Common myeloid progenitor, CD34-positive (primary cell): ENCODE measurements at regions of chr11 and their contacts with region 1.

Region 1: GRCh38 chr11:9384535-9385303 is at the start of gene IPO7:
- DNase-seq: peak; percentile 87 to 95 (median 94)
- H3K4me3 ChIP-seq: peak within 1 kb of the TSS; percentile 75 to 98 (median 92)
- H3K27ac ChIP-seq: peak within 1 kb of the TSS; percentile 80 to 91
- H3K4me1 ChIP-seq: peaks cover 4 to 28% (median 20%) of the 10 kb centered on the region in 4 experiments
- H3K27me3 ChIP-seq: no peaks in the 10 kb centered on the region

Region 2: GRCh38 chr11:9367551-9367950 is 17.2 kb before region 1 on chr11:
- CTCF ChIA-PET with region 1: interaction called, 16 read pairs
- POLR2A ChIA-PET with region 1: interaction called, 3 read pairs
- DNase-seq: no peak
- H3K4me3 ChIP-seq: no peak overlapping the region
- H3K27ac ChIP-seq: no peak overlapping the region
- H3K4me1 ChIP-seq: peaks cover 3 to 23% (median 13%) of the 10 kb centered on the region in 4 experiments
- H3K27me3 ChIP-seq: no peaks in the 10 kb centered on the region

Region 3: DNA sequence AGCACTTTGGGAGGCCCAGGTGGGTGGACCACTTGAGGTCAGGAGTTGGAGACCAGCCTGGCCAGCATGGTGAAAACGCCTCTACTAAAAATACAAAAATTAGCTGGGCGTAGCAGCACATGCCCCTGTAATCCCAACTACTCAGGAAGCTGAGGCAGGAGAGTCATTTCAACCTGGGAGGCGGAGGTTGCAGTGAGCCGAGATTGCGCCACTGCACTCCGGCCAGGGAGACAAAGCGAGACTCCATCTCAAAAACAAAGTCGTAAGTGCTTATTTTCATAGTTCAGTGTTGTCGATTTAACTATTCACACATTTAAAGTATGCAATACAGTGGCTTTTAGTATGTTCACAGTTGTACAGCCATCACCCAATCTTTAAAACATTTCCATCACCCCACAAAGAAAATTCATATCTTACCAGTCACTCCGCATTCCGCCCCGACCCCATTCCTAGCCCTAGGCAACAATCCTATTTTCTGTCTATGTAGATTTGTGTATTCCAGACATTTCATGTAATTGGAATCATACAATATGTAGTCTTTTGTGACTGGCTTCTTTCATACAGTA is 11.5 kb after region 1 on chr11:
- CTCF ChIA-PET with region 1: interaction called, 10 read pairs
- POLR2A ChIA-PET with region 1: no interaction called
- DNase-seq: no peak
- H3K4me3 ChIP-seq: no peak overlapping the region
- H3K27ac ChIP-seq: no peak overlapping the region
- H3K4me1 ChIP-seq: peaks cover 4 to 18% (median 11%) of the 10 kb centered on the region in 4 experiments
- H3K27me3 ChIP-seq: no peaks in the 10 kb centered on the region